IMR-90 (cell line): ENCODE measurements at regions of chr1 and their contacts with region 1.

Region 1: DNA sequence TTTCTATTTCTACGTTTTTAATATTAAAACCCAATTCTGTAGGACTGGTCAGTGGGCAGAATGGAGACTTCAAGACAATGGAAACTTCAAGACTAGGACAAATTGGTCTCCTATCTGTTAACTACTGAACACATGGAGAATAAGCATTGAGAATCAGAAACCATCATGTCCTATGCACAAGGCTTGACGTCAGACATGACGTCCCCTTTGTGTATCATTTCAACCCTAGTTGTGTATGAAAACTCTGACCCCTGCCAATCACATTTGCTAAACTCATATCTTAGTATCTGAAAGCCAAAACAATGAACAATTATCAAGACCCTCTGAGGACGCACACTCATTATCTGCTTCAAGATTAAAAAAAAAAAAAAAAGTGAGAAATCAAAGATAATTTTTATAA is 6.3 kb downstream of the USH2A start:
- DNase-seq: no peak
- ATAC-seq: no peak
- H3K4me3 ChIP-seq: no peak overlapping the region
- H3K27ac ChIP-seq: no peak overlapping the region
- H3K4me1 ChIP-seq: no peaks in the 10 kb centered on the region
- H3K27me3 ChIP-seq: no peaks in the 10 kb centered on the region
- CTCF ChIP-seq: no peak
- POLR2A ChIP-seq: no peak
- RAD21 ChIP-seq: no peak

Region 2: DNA sequence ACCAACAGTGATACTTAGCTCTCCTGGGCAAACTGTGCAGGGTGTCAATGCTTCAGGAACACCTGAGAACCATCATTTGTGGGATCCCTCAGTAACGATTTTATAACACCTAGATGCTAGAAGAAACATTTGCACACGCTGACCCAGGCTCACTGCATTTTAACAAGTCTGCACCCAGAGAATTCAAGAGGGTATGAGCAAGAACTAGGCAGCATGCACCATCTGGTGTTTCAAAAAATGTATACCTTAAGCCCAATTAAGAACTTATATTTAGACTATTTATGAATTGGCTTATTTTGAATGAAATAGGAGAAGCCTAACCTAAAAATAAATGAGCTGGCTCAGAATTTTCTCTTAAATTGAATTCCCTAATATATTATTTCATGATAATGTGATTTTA is 813.5 kb after region 1 on chr1:
- CTCF ChIA-PET with region 1: interaction called, 10 read pairs
- POLR2A ChIA-PET with region 1: no interaction called
- dilution Hi-C with region 1: no loop called
- in situ Hi-C with region 1: no loop called
- intact Hi-C with region 1: no loop called
- DNase-seq: no peak
- ATAC-seq: no peak
- H3K4me3 ChIP-seq: no peak overlapping the region
- H3K27ac ChIP-seq: no peak overlapping the region
- H3K4me1 ChIP-seq: no peaks in the 10 kb centered on the region
- H3K27me3 ChIP-seq: no peaks in the 10 kb centered on the region
- CTCF ChIP-seq: no peak
- POLR2A ChIP-seq: no peak
- RAD21 ChIP-seq: no peak